Psoas muscle (tissue), 8 donors: ENCODE measurements at regions of chr3 and their contacts with region 1.

Region 1: GRCh38 chr3:108090701-108091451 is at the start of gene CD47:
- DNase-seq: peak; percentile 96 to 97
- ATAC-seq: peak; percentile 95 to 97 (median 96)
- H3K4me3 ChIP-seq: peak within 1 kb of the TSS; percentile 91
- H3K27ac ChIP-seq: peak within 1 kb of the TSS; percentile 82
- H3K4me1 ChIP-seq: peaks cover 7% of the 10 kb centered on the region
- H3K27me3 ChIP-seq: no peaks in the 10 kb centered on the region
- CTCF ChIP-seq: no peak
- total RNA-seq, gene CD47: 12.9 to 26.5 (median 17.5) TPM

Region 2: GRCh38 chr3:108073764-108074431 is 17.0 kb before region 1 on chr3:
- intact Hi-C with region 1: no loop called
- DNase-seq: no peak
- ATAC-seq: no peak
- H3K4me3 ChIP-seq: no peak overlapping the region
- H3K27ac ChIP-seq: no peak overlapping the region
- H3K4me1 ChIP-seq: no peaks in the 10 kb centered on the region
- H3K27me3 ChIP-seq: no peaks in the 10 kb centered on the region
- CTCF ChIP-seq: no peak

Region 3: DNA sequence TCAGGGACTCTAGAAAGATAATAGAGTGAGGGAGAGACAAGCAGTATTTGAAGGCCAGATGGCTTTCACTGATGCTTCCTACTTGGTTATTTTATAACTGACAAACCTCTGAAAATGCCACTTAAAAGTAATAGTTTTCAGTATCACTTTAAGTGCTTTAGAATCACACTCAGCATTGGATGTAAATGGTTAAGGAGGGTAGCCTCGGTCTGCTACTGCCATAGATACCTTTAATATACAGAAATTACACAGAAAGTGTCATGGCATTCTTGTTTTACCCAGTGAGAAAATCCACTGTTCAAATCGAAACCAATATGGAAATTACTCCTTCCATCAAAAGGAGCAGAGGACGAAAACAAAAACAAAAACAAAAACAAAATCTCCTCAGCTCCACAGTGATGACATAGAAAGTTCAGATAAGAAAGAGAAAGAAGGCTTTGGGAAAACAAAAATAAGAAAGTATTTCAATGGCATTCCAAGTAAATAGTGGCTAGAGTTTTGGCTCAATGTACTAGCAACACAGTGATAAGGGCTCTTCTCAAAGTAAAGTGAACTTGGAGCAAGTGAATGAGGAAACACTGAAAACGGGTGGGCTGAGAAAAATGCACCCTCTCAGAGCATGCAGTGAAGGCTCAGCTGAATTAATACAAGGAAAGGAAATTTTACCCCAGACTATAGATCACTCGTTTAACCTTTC is 43.1 kb after region 1 on chr3:
- intact Hi-C with region 1: loop called in 1 of 2 experiments (anchors 2 kb)
- DNase-seq: no peak
- ATAC-seq: no peak
- H3K4me3 ChIP-seq: no peak overlapping the region
- H3K27ac ChIP-seq: no peak overlapping the region
- H3K4me1 ChIP-seq: peaks cover 32% of the 10 kb centered on the region
- H3K27me3 ChIP-seq: no peaks in the 10 kb centered on the region
- CTCF ChIP-seq: no peak

Region 4: DNA sequence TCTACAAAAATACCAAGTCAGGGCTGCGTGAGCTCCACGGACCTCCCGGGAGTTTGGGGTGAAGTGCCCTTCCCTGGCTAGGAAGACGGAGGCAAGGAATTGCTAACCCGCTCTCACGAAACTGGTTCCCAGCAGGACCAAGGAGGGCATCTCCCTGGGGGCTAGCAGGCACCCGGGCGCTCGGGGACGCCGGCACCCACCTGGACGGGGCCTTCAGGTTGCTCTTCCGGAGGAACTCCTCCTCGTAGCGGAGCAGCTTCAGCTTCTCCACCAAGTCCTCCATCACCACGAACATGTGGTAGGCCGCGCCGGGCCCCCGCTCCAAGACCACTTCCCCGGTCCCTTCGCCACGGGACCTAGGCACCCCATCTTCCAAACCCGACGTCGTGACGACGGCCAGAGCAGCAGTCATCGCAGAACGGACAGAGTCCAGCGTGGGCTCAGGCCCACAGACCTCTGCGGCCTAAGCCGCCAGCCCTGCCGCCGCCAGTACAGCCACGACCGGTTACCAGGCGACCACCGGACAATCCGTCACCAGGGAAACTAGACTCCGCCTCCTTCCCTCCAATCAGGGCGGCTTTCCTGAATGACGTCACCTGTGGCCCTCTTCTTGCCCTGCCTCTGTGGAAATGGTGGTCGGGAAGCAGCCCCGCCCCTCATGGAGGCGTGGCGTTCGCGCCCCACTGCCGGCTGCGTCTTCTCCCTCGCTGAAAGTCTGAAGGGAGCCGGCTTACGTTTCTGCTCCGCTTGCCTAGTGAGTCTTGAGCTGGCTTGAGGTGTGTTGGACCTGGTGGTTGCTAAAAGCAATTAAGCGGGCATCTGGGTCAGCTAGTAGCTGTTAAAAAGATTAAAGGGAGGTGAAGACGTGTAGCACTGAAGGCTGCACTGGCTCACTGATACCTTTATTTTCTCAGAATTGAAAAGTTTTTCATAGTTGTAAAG is 131.3 kb after region 1 on chr3 and contains the start of gene IFT57:
- intact Hi-C with region 1: loop called (anchors 2 to 10 kb)
- DNase-seq: peak; percentile 95 to 97
- ATAC-seq: peak; percentile 99 to 100 (median 99)
- H3K4me3 ChIP-seq: peak within 1 kb of the TSS; percentile 89
- H3K27ac ChIP-seq: peak within 1 kb of the TSS; percentile 75
- H3K4me1 ChIP-seq: peaks cover 16% of the 10 kb centered on the region
- H3K27me3 ChIP-seq: no peaks in the 10 kb centered on the region
- CTCF ChIP-seq: no peak
- total RNA-seq, gene IFT57: 11.8 to 18.0 (median 13.5) TPM

Region 5: DNA sequence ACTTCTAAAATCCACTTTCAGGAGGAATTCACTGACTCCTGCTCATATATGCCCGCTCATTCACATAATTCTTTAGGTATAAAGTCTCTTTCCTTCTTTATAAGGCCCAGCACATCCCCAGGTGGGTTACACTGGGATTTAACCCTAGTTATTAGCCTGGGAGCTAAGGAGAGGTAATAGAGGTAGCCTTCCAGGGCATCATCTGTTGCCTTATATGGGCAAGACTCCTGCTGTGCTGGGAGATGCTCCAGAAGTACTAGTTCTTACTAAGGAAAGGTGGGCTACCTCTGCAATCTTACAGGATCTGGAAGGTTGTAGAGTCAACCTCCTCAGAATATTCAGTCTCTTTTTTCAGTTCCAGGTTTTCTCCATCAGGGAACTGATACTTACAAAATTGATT is 144.4 kb after region 1 on chr3:
- intact Hi-C with region 1: no loop called
- DNase-seq: no peak
- ATAC-seq: no peak
- H3K4me3 ChIP-seq: no peak overlapping the region
- H3K27ac ChIP-seq: no peak overlapping the region
- H3K4me1 ChIP-seq: no peaks in the 10 kb centered on the region
- H3K27me3 ChIP-seq: no peaks in the 10 kb centered on the region
- CTCF ChIP-seq: no peak

Region 6: DNA sequence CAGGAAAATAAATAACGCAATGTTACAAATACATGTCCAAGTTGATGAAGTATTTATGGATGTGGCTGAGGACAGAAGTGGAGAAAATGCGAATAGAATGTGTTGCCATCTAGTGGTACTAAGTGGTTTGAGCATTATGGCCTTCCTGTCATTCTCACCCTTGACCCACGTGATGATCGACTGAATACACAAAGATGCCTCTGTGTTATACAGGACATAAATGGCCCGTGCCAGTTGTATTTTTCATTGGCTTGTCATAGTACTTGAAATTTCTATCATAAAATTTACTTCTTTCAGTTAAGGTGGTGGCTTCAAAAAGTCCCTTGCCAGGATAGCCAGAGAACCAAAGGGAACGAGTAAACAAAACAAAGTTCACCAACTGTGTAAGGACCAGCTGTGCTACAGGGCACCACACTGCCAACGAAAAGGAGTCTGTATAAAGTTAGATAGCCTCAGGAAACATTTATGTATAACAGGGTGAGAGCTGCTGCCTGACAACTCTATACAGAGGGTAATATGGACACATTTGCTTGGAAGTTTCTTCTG is 315.9 kb after region 1 on chr3:
- intact Hi-C with region 1: loop called in 1 of 2 experiments (anchors 5 kb)
- DNase-seq: no peak
- ATAC-seq: peak; percentile 65 to 75 (median 71)
- H3K4me3 ChIP-seq: no peak overlapping the region
- H3K27ac ChIP-seq: no peak overlapping the region
- H3K4me1 ChIP-seq: no peaks in the 10 kb centered on the region
- H3K27me3 ChIP-seq: no peaks in the 10 kb centered on the region
- CTCF ChIP-seq: peak; percentile 80

Region 7: DNA sequence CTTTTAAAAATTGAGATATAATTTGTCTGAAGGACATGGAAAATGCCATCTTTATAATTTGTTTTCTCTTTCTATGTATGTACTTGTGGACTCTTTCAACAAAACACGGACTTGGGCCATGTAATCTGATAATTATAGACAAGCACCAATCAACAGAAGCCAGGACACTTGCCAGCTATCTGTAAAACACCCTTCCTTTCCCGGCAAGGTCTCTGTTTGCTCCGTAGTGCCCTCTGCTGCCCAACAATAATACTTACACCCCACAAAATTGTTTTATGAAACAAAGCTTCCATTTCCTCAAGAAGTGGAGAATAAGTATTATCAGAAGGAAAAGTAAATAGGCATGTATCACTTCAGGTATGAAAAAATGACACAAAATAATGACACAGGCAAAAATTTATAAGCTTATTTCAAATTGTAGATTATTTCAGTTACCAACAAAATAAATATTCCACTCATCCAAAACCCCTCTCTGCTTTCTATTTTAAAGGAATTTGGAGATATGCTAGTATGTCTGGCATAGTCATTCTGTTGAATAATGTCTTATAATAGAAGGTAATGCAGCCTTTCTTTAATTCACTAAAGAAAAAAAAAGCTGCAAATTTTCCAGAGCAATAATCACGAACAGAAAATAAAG is 386.8 kb after region 1 on chr3:
- intact Hi-C with region 1: loop called in 1 of 2 experiments (anchors 2 kb)
- DNase-seq: peak in 1 of 2 donors; percentile 26
- ATAC-seq: peak; percentile 64 to 85 (median 80)
- H3K4me3 ChIP-seq: no peak overlapping the region
- H3K27ac ChIP-seq: no peak overlapping the region
- H3K4me1 ChIP-seq: no peaks in the 10 kb centered on the region
- H3K27me3 ChIP-seq: peaks cover 0 to 2% (median 0%) of the 10 kb centered on the region in 3 donors
- CTCF ChIP-seq: peak; percentile 56